ENCODE measurements at regions of chr18 and their contacts with region 1.

Region 1: DNA sequence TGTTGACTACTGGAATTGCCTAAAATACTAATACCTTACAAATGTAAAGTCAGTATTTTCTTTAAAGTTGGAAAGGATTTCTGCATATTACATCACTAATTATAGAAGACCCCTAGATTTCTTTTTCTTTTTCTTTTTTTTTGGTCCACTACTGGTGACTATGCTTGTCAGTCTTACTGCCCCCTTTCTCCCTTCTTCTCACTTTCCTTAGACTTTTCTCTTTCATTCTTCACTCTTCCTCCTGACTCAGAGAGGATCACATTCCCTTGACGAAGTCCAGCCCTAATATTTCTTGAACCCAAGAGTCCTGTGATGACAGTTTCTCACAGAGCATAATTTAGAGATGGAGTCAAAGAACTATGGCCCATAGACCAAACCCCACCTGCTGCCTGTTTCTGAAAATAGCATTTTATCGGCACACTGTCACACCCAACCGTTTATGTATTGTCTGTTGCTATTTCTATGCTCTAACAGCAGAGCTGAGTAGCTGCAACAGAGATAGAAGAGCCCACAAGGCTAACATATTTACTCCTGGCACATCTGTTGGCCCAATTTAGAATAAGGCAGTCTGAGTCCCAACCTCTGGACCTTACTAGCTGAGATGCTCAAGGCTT is 40.6 kb upstream of the RIOK3 start:
- DNase-seq: no peak
- ATAC-seq: no peak
- H3K4me3 ChIP-seq: no peak overlapping the region
- H3K4me3 Mint-ChIP-seq: no peak overlapping the region
- H3K27ac ChIP-seq: no peak overlapping the region
- H3K27ac Mint-ChIP-seq: no peak overlapping the region
- H3K4me1 ChIP-seq: no peaks in the 10 kb centered on the region
- H3K4me1 Mint-ChIP-seq: peaks cover 0 to 8% (median 0%) of the 10 kb centered on the region in 7 donors
- H3K27me3 ChIP-seq: no peaks in the 10 kb centered on the region
- H3K27me3 Mint-ChIP-seq: no peaks in the 10 kb centered on the region

Region 2: DNA sequence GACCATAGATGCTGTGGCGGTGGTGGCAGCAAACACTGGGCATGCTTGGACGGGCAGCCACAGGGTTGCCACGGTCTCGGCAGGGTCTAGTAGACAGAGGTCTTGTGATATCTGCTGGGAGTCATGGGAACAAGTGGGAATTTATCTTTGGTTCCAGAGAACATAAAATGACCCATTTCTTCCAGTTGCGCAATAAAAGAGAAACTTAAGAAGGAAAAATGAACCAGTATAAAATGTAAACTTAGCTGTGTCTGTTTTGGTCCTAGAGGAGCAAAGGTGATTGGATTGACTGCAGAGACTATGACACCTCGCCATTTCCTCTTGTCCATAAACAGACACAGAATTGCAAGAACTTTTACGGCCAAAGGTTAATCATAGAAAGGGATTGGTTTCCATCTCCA is 611.9 kb before region 1 on chr18:
- CTCF ChIA-PET with region 1: interaction called, 4 read pairs
- POLR2A ChIA-PET with region 1: no interaction called
- intact Hi-C with region 1: loop called in 1 of 2 experiments (anchors 1 kb)
- DNase-seq: no peak
- ATAC-seq: no peak
- H3K4me3 ChIP-seq: no peak overlapping the region
- H3K4me3 Mint-ChIP-seq: no peak overlapping the region
- H3K27ac ChIP-seq: no peak overlapping the region
- H3K27ac Mint-ChIP-seq: no peak overlapping the region
- H3K4me1 ChIP-seq: no peaks in the 10 kb centered on the region
- H3K4me1 Mint-ChIP-seq: no peaks in the 10 kb centered on the region
- H3K27me3 ChIP-seq: no peaks in the 10 kb centered on the region
- H3K27me3 Mint-ChIP-seq: peaks cover 0 to 19% (median 0%) of the 10 kb centered on the region in 5 donors

Region 3: DNA sequence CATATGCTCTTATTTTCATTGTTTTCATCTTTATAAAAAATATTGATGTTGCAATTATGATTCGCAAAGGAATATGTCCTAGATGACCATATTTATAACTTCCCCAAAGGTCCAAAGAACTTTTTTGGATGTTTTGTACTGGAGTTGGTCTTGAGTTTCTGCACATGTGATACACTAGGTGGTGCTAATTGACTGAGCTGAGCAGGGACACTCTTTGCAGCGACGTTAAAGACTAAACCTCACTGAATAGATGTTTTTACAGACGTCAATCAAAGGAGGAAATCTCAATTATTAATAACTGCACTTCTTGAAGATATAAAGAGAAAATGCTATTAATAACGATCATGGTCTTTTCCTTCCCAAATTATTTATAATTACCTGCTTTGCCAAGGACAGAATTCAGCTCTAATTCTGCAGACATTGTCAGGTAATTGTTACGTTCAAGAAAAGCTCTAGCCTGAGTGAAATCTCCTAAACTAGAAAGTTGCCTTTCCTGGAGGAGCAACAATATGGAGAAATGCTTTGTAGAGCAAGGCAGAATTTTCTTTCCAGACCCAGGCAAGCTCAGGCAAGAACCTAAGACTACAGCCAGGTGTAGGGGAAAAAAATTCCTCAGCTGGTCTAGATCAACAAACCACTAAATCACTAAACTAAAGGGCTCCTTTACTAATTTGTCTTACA is 598.7 kb before region 1 on chr18:
- CTCF ChIA-PET with region 1: no interaction called
- POLR2A ChIA-PET with region 1: no interaction called
- intact Hi-C with region 1: loop called in 1 of 2 experiments (anchors 5 kb)
- DNase-seq: peak in 3 of 9 donors; percentile 5 to 27 (median 5)
- ATAC-seq: peak; percentile 50
- H3K4me3 ChIP-seq: no peak overlapping the region
- H3K4me3 Mint-ChIP-seq: no peak overlapping the region
- H3K27ac ChIP-seq: no peak overlapping the region
- H3K27ac Mint-ChIP-seq: no peak overlapping the region
- H3K4me1 ChIP-seq: no peaks in the 10 kb centered on the region
- H3K4me1 Mint-ChIP-seq: no peaks in the 10 kb centered on the region
- H3K27me3 ChIP-seq: no peaks in the 10 kb centered on the region
- H3K27me3 Mint-ChIP-seq: peaks cover 14 to 32% (median 25%) of the 10 kb centered on the region in 5 donors

Region 4: DNA sequence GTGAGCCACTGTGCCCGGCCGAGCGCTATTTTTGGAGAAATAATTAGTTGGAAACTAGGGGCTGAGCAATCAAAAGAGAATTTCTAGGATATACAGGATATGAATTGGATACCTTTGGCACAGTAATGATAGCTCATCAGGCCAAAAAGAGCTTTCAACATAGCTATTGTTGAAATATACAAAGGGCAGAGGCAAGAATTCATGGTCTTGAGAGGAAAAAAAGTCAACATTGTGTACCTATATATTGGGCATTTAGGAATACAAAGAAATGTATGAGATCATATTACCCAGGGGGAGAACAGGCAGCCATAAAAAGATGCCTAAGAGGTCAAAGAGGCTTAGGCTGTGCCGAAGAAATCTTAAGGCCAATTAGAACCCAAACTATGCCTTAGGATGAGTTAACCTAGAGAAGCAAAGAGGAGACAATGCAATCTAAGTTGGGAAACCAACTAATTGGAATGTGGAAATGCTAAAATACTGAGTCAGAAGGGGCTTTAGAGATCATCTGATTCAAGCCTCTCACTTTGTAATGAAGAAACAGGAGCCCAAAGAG is 380.4 kb before region 1 on chr18:
- CTCF ChIA-PET with region 1: interaction called, 23 read pairs
- POLR2A ChIA-PET with region 1: no interaction called
- intact Hi-C with region 1: loop called in 1 of 2 experiments (anchors 2 kb)
- DNase-seq: no peak
- ATAC-seq: no peak
- H3K4me3 ChIP-seq: no peak overlapping the region
- H3K4me3 Mint-ChIP-seq: no peak overlapping the region
- H3K27ac ChIP-seq: no peak overlapping the region
- H3K27ac Mint-ChIP-seq: peak overlapping the region in 2 of 9 donors; percentile 51
- H3K4me1 ChIP-seq: no peaks in the 10 kb centered on the region
- H3K4me1 Mint-ChIP-seq: peaks cover 0 to 12% (median 8%) of the 10 kb centered on the region in 7 donors
- H3K27me3 ChIP-seq: no peaks in the 10 kb centered on the region
- H3K27me3 Mint-ChIP-seq: no peaks in the 10 kb centered on the region

Region 5: GRCh38 chr18:23077493-23078256 is 334.8 kb before region 1 on chr18:
- CTCF ChIA-PET with region 1: no interaction called
- POLR2A ChIA-PET with region 1: no interaction called
- intact Hi-C with region 1: loop called in 1 of 2 experiments (anchors 1 kb)
- DNase-seq: peak in 1 of 9 donors; percentile 16
- ATAC-seq: no peak
- H3K4me3 ChIP-seq: no peak overlapping the region
- H3K4me3 Mint-ChIP-seq: peak overlapping the region in 6 of 10 donors; percentile 17 to 75 (median 32)
- H3K27ac ChIP-seq: no peak overlapping the region
- H3K27ac Mint-ChIP-seq: peak overlapping the region in 2 of 9 donors; percentile 33 to 76
- H3K4me1 ChIP-seq: peaks cover 5 to 18% of the 10 kb centered on the region in 2 donors
- H3K4me1 Mint-ChIP-seq: peaks cover 18 to 52% (median 42%) of the 10 kb centered on the region in 7 donors
- H3K27me3 ChIP-seq: no peaks in the 10 kb centered on the region
- H3K27me3 Mint-ChIP-seq: no peaks in the 10 kb centered on the region

Region 6: GRCh38 chr18:23209031-23209430 is 203.4 kb before region 1 on chr18:
- CTCF ChIA-PET with region 1: no interaction called
- POLR2A ChIA-PET with region 1: no interaction called
- intact Hi-C with region 1: no loop called
- DNase-seq: peak in 1 of 9 donors; percentile 34
- ATAC-seq: no peak
- H3K4me3 ChIP-seq: no peak overlapping the region
- H3K4me3 Mint-ChIP-seq: no peak overlapping the region
- H3K27ac ChIP-seq: no peak overlapping the region
- H3K27ac Mint-ChIP-seq: no peak overlapping the region
- H3K4me1 ChIP-seq: no peaks in the 10 kb centered on the region
- H3K4me1 Mint-ChIP-seq: peaks cover 0 to 3% (median 0%) of the 10 kb centered on the region in 7 donors
- H3K27me3 ChIP-seq: no peaks in the 10 kb centered on the region
- H3K27me3 Mint-ChIP-seq: peaks cover 0 to 6% (median 5%) of the 10 kb centered on the region in 5 donors

Measured in naive thymus-derived CD4-positive, alpha-beta T cell (primary cell).